ENCODE measurements at regions of chr13 and their contacts with region 1.

Region 1: DNA sequence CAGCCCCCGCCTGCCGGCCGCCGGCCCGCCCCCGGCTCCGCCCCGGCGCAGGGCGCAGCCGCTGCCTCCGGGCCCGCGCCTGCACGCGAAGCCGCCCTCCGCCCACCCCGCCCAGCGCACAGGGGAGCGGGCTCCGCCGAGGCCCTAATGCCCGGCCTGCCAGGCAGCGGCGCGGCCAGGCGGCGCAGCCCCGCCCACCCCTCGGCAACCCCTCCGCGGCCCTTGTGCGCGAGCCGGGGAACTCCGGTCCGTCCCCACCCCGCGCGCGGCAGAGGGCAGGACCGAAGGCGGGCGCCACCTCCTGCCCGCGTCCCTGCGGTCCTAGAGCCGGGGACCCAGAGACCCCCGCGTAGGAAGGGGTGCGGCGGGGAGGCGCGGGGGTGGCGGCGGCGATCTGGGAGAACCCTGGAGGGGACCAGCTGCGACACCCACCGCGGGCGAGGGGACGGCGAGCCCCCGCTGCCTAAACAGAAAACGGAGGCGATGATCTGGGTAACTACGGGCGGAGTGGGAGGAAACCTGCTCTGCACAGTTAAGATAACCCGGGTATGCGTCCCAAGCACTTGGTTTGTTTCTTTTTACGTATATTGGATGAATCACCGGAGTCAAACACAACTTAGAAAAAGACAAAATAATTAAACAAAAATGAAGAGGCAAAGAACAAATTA is 350 bp upstream of the USP12 start:
- DNase-seq: peak; percentile 90 to 95
- ATAC-seq: peak; percentile 94 to 99 (median 96)
- H3K4me3 ChIP-seq: peak overlapping the region; percentile 79 to 97 (median 87)
- H3K27ac ChIP-seq: peak overlapping the region; percentile 81 to 97 (median 95)
- H3K4me1 ChIP-seq: peaks cover 11 to 63% (median 38%) of the 10 kb centered on the region in 9 donors
- H3K27me3 ChIP-seq: no peaks in the 10 kb centered on the region
- CTCF ChIP-seq: peak in 7 of 9 donors; percentile 17 to 56 (median 29)

Region 2: DNA sequence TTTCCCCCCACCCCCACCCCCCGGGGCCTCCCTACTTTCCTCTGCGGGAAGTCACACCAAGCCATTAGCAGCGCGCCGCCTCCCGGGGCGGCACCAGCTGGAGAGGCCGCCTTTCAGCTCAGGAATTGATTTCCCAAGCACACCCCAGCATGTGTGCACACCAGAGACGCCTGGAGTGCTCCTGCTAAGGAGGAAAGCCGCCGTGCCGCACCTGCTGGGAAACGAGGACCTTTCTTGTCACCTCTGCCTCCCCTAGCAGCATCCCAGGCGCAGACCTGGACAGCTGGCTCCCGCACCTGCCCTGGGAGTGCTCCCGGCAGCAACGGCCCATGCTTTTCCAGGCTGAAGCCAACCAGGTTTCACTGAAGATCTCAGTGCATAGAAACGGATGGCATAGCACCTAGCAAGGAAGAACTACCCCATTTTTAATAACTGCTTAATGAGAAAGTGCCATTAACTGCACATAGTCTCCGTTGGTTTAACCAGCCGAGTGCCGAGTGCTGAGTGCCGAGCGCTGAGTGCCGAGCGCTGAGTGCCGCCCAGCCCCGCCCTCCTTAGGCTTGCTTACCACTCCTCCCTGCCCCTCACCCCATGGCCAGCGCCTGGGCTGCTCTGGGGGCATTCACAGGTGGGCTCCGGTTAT is 165.3 kb before region 1 on chr13:
- intact Hi-C with region 1: loop called in 1 of 10 experiments (anchors 10 kb)
- DNase-seq: no peak
- ATAC-seq: peak; percentile 22 to 77 (median 70)
- H3K4me3 ChIP-seq: peak overlapping the region; percentile 25 to 54 (median 46)
- H3K27ac ChIP-seq: no peak overlapping the region
- H3K4me1 ChIP-seq: peaks cover 3 to 22% (median 18%) of the 10 kb centered on the region in 9 donors
- H3K27me3 ChIP-seq: peaks cover 0 to 27% (median 7%) of the 10 kb centered on the region in 7 donors
- CTCF ChIP-seq: no peak

Region 3: GRCh38 chr13:27130979-27131623 is 40.9 kb before region 1 on chr13:
- intact Hi-C with region 1: loop called in 1 of 10 experiments (anchors 5 kb)
- DNase-seq: no peak
- ATAC-seq: peak in 3 of 8 donors; percentile 17 to 45 (median 44)
- H3K4me3 ChIP-seq: no peak overlapping the region
- H3K27ac ChIP-seq: peak overlapping the region in 3 of 10 donors; percentile 14 to 55 (median 34)
- H3K4me1 ChIP-seq: peaks cover 0 to 53% (median 37%) of the 10 kb centered on the region in 9 donors
- H3K27me3 ChIP-seq: no peaks in the 10 kb centered on the region
- CTCF ChIP-seq: no peak

Region 4: GRCh38 chr13:27251166-27252091 is 79.5 kb after region 1 on chr13 and contains the start of gene RPL21:
- intact Hi-C with region 1: loop called in 8 of 10 experiments (anchors 2 to 10 kb)
- DNase-seq: peak; percentile 95 to 98
- ATAC-seq: peak; percentile 98 to 99 (median 99)
- H3K4me3 ChIP-seq: peak within 1 kb of the TSS; percentile 74 to 94 (median 80)
- H3K27ac ChIP-seq: peak within 1 kb of the TSS; percentile 90 to 99 (median 96)
- H3K4me1 ChIP-seq: peaks cover 6 to 52% (median 39%) of the 10 kb centered on the region in 9 donors
- H3K27me3 ChIP-seq: no peaks in the 10 kb centered on the region
- CTCF ChIP-seq: peak in 1 of 9 donors; percentile 5
- total RNA-seq, gene RPL21: 498 to 733 (median 598) TPM

Region 5: DNA sequence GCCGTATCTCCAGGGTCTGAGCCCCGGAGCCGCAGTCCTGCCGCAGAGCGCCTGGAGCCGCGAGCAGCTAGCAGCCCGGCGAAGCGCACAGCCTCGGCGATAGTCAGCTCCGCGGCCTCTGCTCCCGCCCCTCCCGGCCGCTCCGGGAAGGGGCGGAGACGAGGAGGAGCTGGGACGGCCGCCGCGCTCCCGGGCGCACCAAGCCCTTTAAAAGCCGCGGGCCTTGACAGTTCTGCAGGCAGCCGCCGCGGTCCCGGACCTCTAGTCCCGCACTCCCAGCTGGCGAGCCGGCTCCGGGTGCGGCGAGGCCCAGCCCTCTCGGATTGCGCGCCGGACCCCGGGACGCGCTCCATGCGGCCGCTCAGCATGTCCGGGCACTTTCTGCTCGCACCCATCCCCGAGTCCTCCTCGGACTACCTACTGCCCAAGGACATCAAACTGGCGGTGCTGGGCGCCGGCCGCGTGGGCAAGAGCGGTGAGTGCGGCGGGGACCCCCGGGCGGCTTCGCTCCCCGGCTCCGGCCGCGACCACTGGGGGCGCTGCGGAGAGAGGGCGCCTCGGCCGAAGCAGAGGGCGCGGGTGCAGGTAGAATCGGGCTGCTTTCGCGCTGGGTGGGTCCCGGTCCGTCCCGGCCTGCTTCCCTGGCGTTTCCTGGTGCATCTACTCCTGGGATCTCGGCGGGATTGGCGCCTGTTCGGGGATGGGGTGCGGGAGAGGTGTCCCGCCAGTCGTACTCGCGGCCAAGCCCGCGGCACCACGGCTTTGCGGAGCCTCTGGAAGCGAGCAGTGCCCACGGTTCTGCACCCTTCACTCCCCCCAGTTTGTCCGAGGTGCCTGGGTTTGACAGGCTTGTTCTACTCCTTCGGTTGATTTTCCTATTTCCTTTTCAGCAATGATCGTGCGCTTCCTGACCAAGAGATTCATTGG is 98.9 kb after region 1 on chr13 and contains the start of gene RASL11A:
- intact Hi-C with region 1: loop called in 2 of 10 experiments (anchors 5 kb)
- DNase-seq: peak; percentile 85 to 90
- ATAC-seq: peak; percentile 93 to 95 (median 94)
- H3K4me3 ChIP-seq: peak within 1 kb of the TSS; percentile 50 to 91 (median 78)
- H3K27ac ChIP-seq: peak within 1 kb of the TSS; percentile 79 to 95 (median 92)
- H3K4me1 ChIP-seq: peaks cover 0 to 68% (median 33%) of the 10 kb centered on the region in 9 donors
- H3K27me3 ChIP-seq: no peaks in the 10 kb centered on the region
- CTCF ChIP-seq: peak; percentile 91 to 99 (median 97)
- total RNA-seq, gene RASL11A: 1.8 to 68.7 (median 3.1) TPM